CD8-positive, alpha-beta T cell (primary cell): ENCODE measurements at regions of chr5 and their contacts with region 1.

Region 1: GRCh38 chr5:54517174-54518092 is at the start of gene SNX18:
- DNase-seq: peak; percentile 86 to 96 (median 91)
- ATAC-seq: peak; percentile 90
- H3K4me3 ChIP-seq: peak within 1 kb of the TSS; percentile 72 to 76
- H3K4me3 Mint-ChIP-seq: peak within 1 kb of the TSS; percentile 83
- H3K27ac ChIP-seq: peak within 1 kb of the TSS; percentile 48 to 75
- H3K27ac Mint-ChIP-seq: no peak within 1 kb of the TSS
- H3K4me1 ChIP-seq: peaks cover 33% of the 10 kb centered on the region
- H3K4me1 Mint-ChIP-seq: peaks cover 30% of the 10 kb centered on the region
- H3K27me3 ChIP-seq: peaks cover 0 to 2% of the 10 kb centered on the region in 2 experiments
- H3K27me3 Mint-ChIP-seq: no peaks in the 10 kb centered on the region
- CTCF ChIP-seq: peak; percentile 96
- total RNA-seq, gene SNX18: 12.7 to 12.9 TPM

Region 2: DNA sequence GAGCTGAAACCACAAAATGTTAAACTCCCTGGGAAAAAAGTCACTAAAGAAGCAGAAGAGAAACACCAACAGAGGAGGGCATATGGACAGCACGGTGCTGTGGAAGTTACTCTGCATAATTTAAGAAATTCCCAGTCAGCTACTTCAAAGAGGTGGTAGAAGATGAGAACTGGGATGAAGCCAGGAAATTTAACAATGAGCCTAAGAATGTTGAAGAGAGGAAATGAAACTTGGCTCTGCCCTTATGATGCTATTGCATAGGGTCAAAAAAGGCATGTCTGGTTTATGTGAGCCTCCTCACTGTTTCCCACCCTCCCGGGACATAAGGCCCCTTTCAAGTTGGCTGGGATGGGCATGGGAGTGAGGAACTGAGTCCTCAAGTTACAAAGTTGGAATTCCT is 25.3 kb before region 1 on chr5:
- CTCF ChIA-PET with region 1: interaction called, 20 read pairs
- POLR2A ChIA-PET with region 1: no interaction called
- intact Hi-C with region 1: no loop called
- DNase-seq: no peak
- ATAC-seq: no peak
- H3K4me3 ChIP-seq: no peak overlapping the region
- H3K4me3 Mint-ChIP-seq: no peak overlapping the region
- H3K27ac ChIP-seq: no peak overlapping the region
- H3K27ac Mint-ChIP-seq: no peak overlapping the region
- H3K4me1 ChIP-seq: no peaks in the 10 kb centered on the region
- H3K4me1 Mint-ChIP-seq: peaks cover 3% of the 10 kb centered on the region
- H3K27me3 ChIP-seq: peaks cover 3 to 4% of the 10 kb centered on the region in 2 experiments
- H3K27me3 Mint-ChIP-seq: peaks cover 8% of the 10 kb centered on the region
- CTCF ChIP-seq: no peak

Region 3: GRCh38 chr5:54646356-54647101 is 129.1 kb after region 1 on chr5:
- CTCF ChIA-PET with region 1: interaction called, 8 read pairs
- POLR2A ChIA-PET with region 1: interaction called, 12 read pairs
- intact Hi-C with region 1: loop called in 1 of 2 experiments (anchors 2 kb)
- DNase-seq: peak; percentile 33 to 90 (median 69)
- ATAC-seq: peak; percentile 78
- H3K4me3 ChIP-seq: peak overlapping the region; percentile 12 to 21
- H3K4me3 Mint-ChIP-seq: peak overlapping the region; percentile 71
- H3K27ac ChIP-seq: peak overlapping the region; percentile 42 to 70
- H3K27ac Mint-ChIP-seq: peak overlapping the region; percentile 95
- H3K4me1 ChIP-seq: peaks cover 49% of the 10 kb centered on the region
- H3K4me1 Mint-ChIP-seq: peaks cover 59% of the 10 kb centered on the region
- H3K27me3 ChIP-seq: no peaks in the 10 kb centered on the region
- H3K27me3 Mint-ChIP-seq: no peaks in the 10 kb centered on the region
- CTCF ChIP-seq: no peak

Region 4: DNA sequence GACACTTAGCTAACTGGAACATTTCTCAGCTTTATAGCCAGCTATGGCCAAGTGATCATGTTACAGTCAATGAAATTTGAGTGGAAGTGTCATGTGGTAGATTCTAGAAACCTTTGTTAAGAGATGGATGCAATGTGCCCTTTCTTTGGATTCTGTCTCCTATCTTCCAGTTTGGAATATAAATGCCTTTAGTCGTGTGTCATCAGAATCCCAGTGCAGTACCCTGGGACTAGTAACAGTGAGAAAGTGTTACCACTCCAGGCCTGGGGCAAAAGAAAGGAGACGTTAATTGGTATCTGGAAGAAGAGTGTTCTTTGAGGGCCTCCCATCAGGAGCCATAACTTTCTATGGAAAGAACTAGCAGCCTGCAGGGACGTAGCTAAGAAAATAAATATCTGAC is 149.7 kb after region 1 on chr5:
- CTCF ChIA-PET with region 1: no interaction called
- POLR2A ChIA-PET with region 1: no interaction called
- intact Hi-C with region 1: no loop called
- DNase-seq: no peak
- ATAC-seq: no peak
- H3K4me3 ChIP-seq: no peak overlapping the region
- H3K4me3 Mint-ChIP-seq: no peak overlapping the region
- H3K27ac ChIP-seq: no peak overlapping the region
- H3K27ac Mint-ChIP-seq: no peak overlapping the region
- H3K4me1 ChIP-seq: peaks cover 12% of the 10 kb centered on the region
- H3K4me1 Mint-ChIP-seq: peaks cover 21% of the 10 kb centered on the region
- H3K27me3 ChIP-seq: no peaks in the 10 kb centered on the region
- H3K27me3 Mint-ChIP-seq: no peaks in the 10 kb centered on the region
- CTCF ChIP-seq: no peak

Region 5: GRCh38 chr5:54769071-54769470 is 251.6 kb after region 1 on chr5:
- CTCF ChIA-PET with region 1: interaction called, 12 read pairs
- POLR2A ChIA-PET with region 1: no interaction called
- intact Hi-C with region 1: no loop called
- DNase-seq: no peak
- ATAC-seq: no peak
- H3K4me3 ChIP-seq: no peak overlapping the region
- H3K4me3 Mint-ChIP-seq: no peak overlapping the region
- H3K27ac ChIP-seq: no peak overlapping the region
- H3K27ac Mint-ChIP-seq: no peak overlapping the region
- H3K4me1 ChIP-seq: no peaks in the 10 kb centered on the region
- H3K4me1 Mint-ChIP-seq: no peaks in the 10 kb centered on the region
- H3K27me3 ChIP-seq: no peaks in the 10 kb centered on the region
- H3K27me3 Mint-ChIP-seq: no peaks in the 10 kb centered on the region
- CTCF ChIP-seq: no peak

Region 6: DNA sequence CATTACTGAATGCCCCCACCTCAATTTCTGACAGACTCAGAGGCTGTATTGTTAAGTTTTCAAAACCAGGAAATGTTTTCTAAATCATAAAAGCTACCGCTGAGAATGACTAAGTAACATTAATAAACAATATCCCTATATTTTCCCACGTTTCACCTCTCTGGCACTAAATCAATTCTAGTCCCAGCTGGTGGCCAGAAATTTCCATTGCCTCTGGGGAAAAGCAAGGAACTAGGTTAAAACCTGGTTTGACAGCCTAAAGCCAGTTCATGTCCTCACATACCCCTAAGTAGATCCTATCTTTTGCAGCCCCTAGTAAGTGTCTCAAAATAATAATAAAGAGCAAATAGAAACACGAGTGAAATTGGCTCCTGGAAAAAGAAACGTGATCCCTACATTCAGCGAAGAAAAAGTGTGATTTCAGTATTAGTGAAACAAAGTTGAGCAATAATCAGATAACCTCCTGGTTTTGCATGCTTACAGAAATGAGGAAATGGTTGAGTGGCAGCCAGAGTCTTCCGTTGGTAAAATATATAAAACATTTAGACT is 357.0 kb after region 1 on chr5:
- CTCF ChIA-PET with region 1: interaction called, 24 read pairs
- POLR2A ChIA-PET with region 1: no interaction called
- intact Hi-C with region 1: no loop called
- DNase-seq: no peak
- ATAC-seq: no peak
- H3K4me3 ChIP-seq: no peak overlapping the region
- H3K4me3 Mint-ChIP-seq: no peak overlapping the region
- H3K27ac ChIP-seq: no peak overlapping the region
- H3K27ac Mint-ChIP-seq: no peak overlapping the region
- H3K4me1 ChIP-seq: no peaks in the 10 kb centered on the region
- H3K4me1 Mint-ChIP-seq: no peaks in the 10 kb centered on the region
- H3K27me3 ChIP-seq: no peaks in the 10 kb centered on the region
- H3K27me3 Mint-ChIP-seq: peaks cover 3% of the 10 kb centered on the region
- CTCF ChIP-seq: no peak

Region 7: DNA sequence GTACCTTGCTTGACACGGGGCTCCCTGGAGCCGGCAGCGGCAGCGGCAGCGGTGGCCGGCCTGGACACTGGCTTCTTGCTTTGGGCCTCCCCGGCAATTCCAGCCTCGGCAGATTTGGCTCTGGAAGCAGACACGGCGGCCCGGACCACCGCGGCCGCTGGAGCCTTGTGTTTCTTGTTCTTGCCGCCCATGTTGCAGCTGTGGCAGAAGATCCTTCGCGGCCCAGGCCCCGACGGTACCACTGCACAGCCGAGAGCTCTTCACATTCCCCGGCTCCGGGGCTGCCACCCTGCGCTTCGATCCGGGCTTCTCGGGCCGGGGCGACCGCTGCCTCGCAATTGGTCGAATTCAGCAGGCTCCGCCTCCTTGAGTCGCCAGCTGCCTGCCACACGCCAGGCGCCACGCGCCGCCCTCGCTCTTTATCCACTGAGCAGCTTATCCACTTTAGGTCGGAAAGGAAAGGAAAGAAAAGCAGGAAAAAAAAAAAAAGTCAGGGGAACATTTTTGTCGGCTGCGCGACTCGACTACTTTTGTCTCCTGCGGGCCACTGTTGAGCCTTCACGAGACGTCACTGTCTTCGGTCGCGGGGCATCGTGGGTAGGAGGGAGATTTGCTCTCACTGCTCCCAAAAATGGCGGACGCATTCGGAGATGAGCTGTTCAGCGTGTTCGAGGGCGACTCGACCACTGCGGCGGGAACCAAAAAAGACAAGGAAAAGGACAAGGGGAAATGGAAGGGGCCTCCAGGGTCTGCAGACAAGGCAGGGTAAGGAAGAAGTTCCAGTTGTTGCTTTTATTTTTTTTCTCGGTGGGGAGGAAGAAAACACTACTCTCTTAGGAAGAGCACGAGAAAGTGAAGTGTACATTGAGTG is 790.2 kb after region 1 on chr5 and contains the starts of genes DHX29 and MTREX:
- CTCF ChIA-PET with region 1: no interaction called
- POLR2A ChIA-PET with region 1: no interaction called
- intact Hi-C with region 1: loop called (anchors 2 kb)
- DNase-seq: peak; percentile 76 to 93 (median 87)
- ATAC-seq: peak; percentile 90
- H3K4me3 ChIP-seq: peak within 1 kb of the TSS; percentile 72 to 76
- H3K4me3 Mint-ChIP-seq: no peak within 1 kb of the TSS
- H3K27ac ChIP-seq: peak within 1 kb of the TSS; percentile 86 to 90
- H3K27ac Mint-ChIP-seq: no peak within 1 kb of the TSS
- H3K4me1 ChIP-seq: peaks cover 41% of the 10 kb centered on the region
- H3K4me1 Mint-ChIP-seq: peaks cover 38% of the 10 kb centered on the region
- H3K27me3 ChIP-seq: no peaks in the 10 kb centered on the region
- H3K27me3 Mint-ChIP-seq: no peaks in the 10 kb centered on the region
- CTCF ChIP-seq: no peak
- total RNA-seq, gene DHX29: 15.4 to 19.9 TPM
- total RNA-seq, gene MTREX: 62.8 to 66.5 TPM

Region 8: DNA sequence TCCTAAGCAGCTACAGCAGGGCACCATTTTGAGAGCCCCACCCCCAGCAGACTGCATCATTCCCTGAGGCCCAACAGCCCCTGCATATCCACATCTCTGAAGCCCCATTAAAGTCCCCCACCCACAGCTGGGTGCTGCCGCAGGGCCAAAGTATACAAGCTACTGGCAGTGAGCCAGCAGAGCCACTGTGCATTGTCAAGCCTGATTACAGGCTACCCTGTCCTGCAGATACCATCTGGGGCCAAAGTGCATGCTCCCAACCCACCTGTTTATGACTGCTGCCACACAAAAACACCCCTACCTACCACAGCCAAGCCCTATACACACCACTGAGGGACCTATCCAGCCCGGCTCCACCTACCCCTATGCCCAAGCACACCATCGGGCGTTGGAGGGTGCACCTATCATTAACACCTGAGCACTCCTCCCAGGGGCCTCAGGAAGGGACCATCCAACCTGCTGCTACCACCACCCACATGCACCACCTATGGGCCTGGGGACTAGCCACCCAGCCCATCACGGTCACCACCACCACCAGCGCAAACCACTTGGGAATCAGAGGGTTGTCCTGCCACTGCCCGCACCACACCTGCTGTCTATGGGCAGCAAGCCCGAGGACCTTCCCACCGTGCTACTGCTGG is 912.3 kb after region 1 on chr5:
- CTCF ChIA-PET with region 1: no interaction called
- POLR2A ChIA-PET with region 1: no interaction called
- intact Hi-C with region 1: no loop called
- DNase-seq: no peak
- ATAC-seq: no peak
- H3K4me3 ChIP-seq: no peak overlapping the region
- H3K4me3 Mint-ChIP-seq: no peak overlapping the region
- H3K27ac ChIP-seq: no peak overlapping the region
- H3K27ac Mint-ChIP-seq: no peak overlapping the region
- H3K4me1 ChIP-seq: no peaks in the 10 kb centered on the region
- H3K4me1 Mint-ChIP-seq: no peaks in the 10 kb centered on the region
- H3K27me3 ChIP-seq: no peaks in the 10 kb centered on the region
- H3K27me3 Mint-ChIP-seq: no peaks in the 10 kb centered on the region
- CTCF ChIP-seq: no peak